ENCODE measurements at regions of chr3 and their contacts with region 1.

Region 1: DNA sequence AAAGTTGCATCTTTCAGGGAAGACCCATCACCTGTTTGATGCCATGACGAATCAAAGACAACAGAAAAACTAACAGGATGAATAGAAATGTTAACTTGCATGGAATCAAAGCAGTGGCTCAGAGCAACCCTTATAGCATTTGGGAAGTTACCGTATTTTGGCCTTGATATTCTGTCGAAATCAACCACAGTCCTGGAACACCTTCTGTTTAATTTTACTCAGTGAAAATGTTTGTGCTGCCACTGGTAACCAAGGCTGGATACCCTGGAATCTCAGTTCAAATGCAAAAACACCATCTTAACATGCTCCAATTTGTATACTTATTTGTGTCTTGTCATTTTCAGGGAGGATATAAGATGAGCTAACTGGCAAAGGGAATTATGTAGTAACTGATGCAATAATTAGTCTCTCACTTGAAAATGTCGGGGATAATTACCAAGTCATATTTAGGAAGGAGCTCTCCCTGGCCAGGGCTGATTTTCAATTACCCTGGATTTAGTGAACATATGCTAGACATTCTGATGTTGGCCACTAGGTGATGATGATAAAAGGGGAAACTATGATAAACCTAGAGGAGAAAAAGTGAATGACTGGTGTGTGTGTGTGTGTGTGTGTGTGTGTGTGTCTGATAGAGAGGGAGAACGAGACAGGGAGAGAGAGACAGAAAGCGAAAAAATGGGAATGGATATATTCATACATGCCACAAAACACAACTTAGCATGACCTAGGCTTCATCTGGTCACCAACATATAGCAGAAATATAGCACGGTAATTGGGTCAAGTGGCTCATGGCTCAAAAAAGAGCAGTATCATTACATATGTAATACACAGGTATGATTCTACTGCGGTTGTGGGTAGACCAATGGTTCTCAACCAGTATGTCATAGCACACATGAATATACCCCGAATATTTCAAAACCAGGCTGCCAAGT is 19.0 kb upstream of the PRICKLE2 start:
- DNase-seq: no peak
- ATAC-seq: peak; percentile 59
- H3K4me3 Mint-ChIP-seq: no peak overlapping the region
- H3K27ac Mint-ChIP-seq: no peak overlapping the region
- H3K4me1 Mint-ChIP-seq: peaks cover 3% of the 10 kb centered on the region
- H3K27me3 Mint-ChIP-seq: no peaks in the 10 kb centered on the region
- CTCF ChIP-seq: no peak

Region 2: DNA sequence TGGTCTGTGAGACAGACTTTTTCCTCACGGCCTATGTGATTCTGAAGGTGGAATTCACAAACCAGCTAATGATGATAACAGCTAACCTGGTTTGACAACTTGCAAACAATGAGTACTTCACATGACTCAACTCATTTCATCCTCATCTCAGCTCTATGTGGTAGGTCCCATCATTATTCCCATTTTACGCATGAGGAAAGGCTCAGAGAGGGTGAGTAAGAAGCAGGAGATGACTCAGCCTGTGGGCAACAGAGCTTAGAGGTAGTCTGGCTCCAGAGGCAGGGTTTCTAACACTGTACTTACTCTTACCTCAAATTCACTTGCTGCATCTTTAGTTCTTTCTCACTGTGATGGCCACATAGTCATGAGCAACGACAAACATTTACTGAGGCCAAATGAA is 195.1 kb before region 1 on chr3:
- CTCF ChIA-PET with region 1: no interaction called
- POLR2A ChIA-PET with region 1: no interaction called
- DNase-seq: no peak
- ATAC-seq: no peak
- H3K4me3 Mint-ChIP-seq: no peak overlapping the region
- H3K27ac Mint-ChIP-seq: no peak overlapping the region
- H3K4me1 Mint-ChIP-seq: peaks cover 29% of the 10 kb centered on the region
- H3K27me3 Mint-ChIP-seq: no peaks in the 10 kb centered on the region
- CTCF ChIP-seq: no peak

Region 3: GRCh38 chr3:64267721-64268604 is 23.7 kb after region 1 on chr3:
- CTCF ChIA-PET with region 1: interaction called, 16 read pairs
- POLR2A ChIA-PET with region 1: no interaction called
- DNase-seq: peak; percentile 75
- ATAC-seq: peak; percentile 92
- H3K4me3 Mint-ChIP-seq: peak overlapping the region; percentile 69
- H3K27ac Mint-ChIP-seq: no peak overlapping the region
- H3K4me1 Mint-ChIP-seq: peaks cover 20% of the 10 kb centered on the region
- H3K27me3 Mint-ChIP-seq: no peaks in the 10 kb centered on the region
- CTCF ChIP-seq: no peak

Measured in WTC11 (cell line).